ENCODE measurements at regions of chr16 and their contacts with region 1.

Region 1: DNA sequence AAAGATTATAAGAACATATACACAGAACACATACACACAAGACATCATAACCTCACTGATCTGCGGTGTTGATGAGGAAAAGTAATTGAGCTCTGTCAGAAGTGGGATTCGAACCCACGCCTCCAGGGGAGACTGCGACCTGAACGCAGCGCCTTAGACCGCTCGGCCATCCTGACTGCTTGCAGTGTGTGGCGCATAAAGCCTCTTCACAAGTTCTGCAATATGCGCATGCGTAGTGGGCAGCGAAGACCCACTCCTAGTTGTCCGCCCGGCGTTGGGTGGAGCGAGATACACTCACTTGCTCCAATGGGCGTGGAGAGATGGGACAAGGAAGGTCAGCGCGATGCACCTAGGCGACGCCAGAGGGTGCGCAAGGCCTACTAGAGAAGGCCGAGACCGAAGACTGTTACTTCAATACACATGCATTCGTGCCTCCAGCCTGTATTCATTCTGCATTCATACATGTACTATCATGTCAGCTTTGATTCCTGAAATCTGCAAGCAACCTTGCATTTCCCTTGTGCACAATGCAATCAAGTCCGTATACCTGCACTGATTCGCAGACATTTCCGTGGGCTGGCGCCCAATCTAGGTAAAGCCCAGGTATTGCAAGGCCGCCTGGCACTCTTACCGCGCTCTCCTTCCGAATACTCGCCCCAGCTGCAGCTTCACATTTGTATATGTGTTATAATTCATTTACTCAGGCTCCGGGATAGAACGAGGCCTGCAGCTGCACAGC is 16.1 kb upstream of the PLLP start:
- DNase-seq: peak; percentile 100
- H3K4me3 ChIP-seq: peak overlapping the region; percentile 47 to 65 (median 52)
- H3K27ac ChIP-seq: peak overlapping the region; percentile 88 to 97 (median 92)
- H3K4me1 ChIP-seq: peaks cover 41 to 45% (median 42%) of the 10 kb centered on the region in 4 donors
- H3K27me3 ChIP-seq: no peaks in the 10 kb centered on the region
- CTCF ChIP-seq: peak; percentile 94 to 99 (median 95)
- EP300 ChIP-seq: no peak
- POLR2A ChIP-seq: no peak

Region 2: DNA sequence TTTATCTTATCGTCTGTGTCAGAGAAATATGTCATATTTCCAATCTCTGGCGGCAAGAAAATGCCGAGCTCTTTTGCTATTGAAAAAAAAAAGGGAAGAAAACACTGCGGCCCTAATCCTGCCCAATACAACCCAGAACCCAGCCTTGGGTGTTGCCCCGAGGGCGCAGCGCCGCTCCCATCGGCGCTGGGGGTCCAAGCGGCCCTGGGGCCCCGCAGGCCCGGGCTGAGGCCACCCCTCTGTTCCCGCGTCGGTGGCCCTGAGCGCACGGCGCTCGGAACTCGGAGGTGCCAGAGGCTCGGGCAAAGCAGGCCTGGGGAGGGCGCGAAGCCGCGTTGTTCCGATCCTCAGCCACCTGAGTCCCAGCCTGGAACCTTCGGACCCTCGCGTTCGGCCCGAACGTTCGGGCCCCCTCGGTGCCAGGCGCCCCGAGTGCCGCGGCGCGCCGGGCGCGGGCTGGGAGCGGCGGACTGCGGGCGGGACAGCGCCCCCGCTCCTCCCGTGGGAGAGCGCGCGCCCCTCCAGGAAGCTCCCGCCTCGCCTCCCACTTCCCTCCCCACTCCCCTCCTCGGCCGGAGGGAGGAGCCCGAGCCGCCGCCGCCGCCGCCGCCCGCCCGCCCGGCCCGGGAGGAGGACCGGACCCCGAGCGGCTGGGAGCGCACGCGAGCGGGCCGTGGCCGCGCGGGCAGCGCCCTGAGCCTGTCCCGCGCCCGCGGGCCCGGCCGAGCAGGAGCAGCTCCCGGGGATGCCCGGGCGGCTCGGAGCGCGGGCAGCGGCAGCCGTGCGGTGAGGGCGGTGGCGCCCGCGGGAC is 208.4 kb before region 1 on chr16 and contains the start of gene CPNE2:
- intact Hi-C with region 1: loop called (anchors 5 kb)
- DNase-seq: no peak
- H3K4me3 ChIP-seq: peak within 1 kb of the TSS; percentile 75 to 99 (median 87)
- H3K27ac ChIP-seq: peak within 1 kb of the TSS; percentile 81 to 88 (median 84)
- H3K4me1 ChIP-seq: peaks cover 15 to 40% (median 29%) of the 10 kb centered on the region in 4 donors
- H3K27me3 ChIP-seq: no peaks in the 10 kb centered on the region
- CTCF ChIP-seq: peak in 1 of 3 experiments; percentile 11
- EP300 ChIP-seq: no peak
- POLR2A ChIP-seq: no peak
- total RNA-seq, gene CPNE2: 21.6 to 43.0 (median 34.9) TPM

Region 3: DNA sequence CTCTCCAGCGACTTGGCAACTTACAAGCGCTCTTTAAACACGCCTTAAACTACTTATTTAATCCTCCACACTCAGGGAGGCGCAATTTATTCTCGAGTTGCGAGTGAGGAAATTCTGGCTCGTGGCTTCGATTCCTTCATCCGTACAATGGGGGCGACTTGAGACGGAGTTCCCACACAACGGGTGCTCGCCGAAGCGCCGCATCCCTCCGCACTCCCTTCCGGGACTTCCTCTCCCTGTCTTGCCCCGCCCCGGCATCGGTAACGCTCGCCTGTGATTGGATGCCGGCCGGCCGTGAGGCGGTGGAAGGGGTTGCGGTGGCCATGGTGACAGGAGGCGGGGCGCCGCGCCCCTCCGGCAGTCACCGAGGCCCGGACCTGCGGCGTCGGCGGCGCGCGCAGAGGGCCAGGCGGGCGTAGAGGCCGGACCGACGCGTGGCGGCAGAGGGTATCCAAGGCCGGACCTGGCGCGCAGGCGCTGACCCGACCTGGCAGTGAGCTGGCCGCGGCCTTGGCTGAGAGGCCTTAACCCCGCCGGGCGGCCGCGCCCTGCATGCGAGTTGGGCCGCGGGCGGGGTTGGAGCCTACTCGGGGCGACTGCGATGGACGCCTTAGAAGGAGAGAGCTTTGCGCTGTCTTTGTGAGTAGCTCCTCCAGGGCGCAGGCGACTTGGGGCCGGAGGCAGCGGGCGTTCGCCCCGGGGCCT is 55.6 kb before region 1 on chr16 and contains the start of gene ARL2BP:
- intact Hi-C with region 1: loop called (anchors 5 kb)
- DNase-seq: peak; percentile 99
- H3K4me3 ChIP-seq: peak within 1 kb of the TSS; percentile 80 to 90 (median 82)
- H3K27ac ChIP-seq: peak within 1 kb of the TSS; percentile 92 to 95 (median 94)
- H3K4me1 ChIP-seq: peaks cover 13 to 23% (median 21%) of the 10 kb centered on the region in 4 donors
- H3K27me3 ChIP-seq: no peaks in the 10 kb centered on the region
- CTCF ChIP-seq: peak in 1 of 3 experiments; percentile 7
- EP300 ChIP-seq: no peak
- POLR2A ChIP-seq: no peak
- total RNA-seq, gene ARL2BP: 58.1 to 77.4 (median 66.9) TPM

Region 4: GRCh38 chr16:57372372-57373116 is 72.0 kb after region 1 on chr16 and contains the start of gene CX3CL1:
- intact Hi-C with region 1: loop called (anchors 2 kb)
- DNase-seq: no peak
- H3K4me3 ChIP-seq: peak within 1 kb of the TSS; percentile 75 to 83 (median 80)
- H3K27ac ChIP-seq: peak within 1 kb of the TSS; percentile 95 to 97 (median 96)
- H3K4me1 ChIP-seq: peaks cover 34 to 63% (median 58%) of the 10 kb centered on the region in 4 donors
- H3K27me3 ChIP-seq: no peaks in the 10 kb centered on the region
- CTCF ChIP-seq: peak in 1 of 3 experiments; percentile 40
- EP300 ChIP-seq: no peak
- POLR2A ChIP-seq: peak; percentile 58
- total RNA-seq, gene CX3CL1: 26.8 to 40.4 (median 29.9) TPM

Region 5: GRCh38 chr16:57422026-57422944 is 121.7 kb after region 1 on chr16:
- intact Hi-C with region 1: loop called (anchors 1 kb)
- DNase-seq: no peak
- H3K4me3 ChIP-seq: no peak overlapping the region
- H3K27ac ChIP-seq: peak overlapping the region; percentile 9 to 57 (median 40)
- H3K4me1 ChIP-seq: peaks cover 36 to 46% (median 42%) of the 10 kb centered on the region in 4 donors
- H3K27me3 ChIP-seq: no peaks in the 10 kb centered on the region
- CTCF ChIP-seq: peak; percentile 72 to 78 (median 76)
- EP300 ChIP-seq: no peak
- POLR2A ChIP-seq: no peak

Region 6: GRCh38 chr16:57528491-57529390 is 228.2 kb after region 1 on chr16:
- intact Hi-C with region 1: loop called (anchors 5 kb)
- DNase-seq: no peak
- H3K4me3 ChIP-seq: no peak overlapping the region
- H3K27ac ChIP-seq: peak overlapping the region in 3 of 4 donors; percentile 83 to 90 (median 87)
- H3K4me1 ChIP-seq: peaks cover 30 to 52% (median 46%) of the 10 kb centered on the region in 4 donors
- H3K27me3 ChIP-seq: no peaks in the 10 kb centered on the region
- CTCF ChIP-seq: no peak
- EP300 ChIP-seq: no peak
- POLR2A ChIP-seq: no peak

Measured in esophagus muscularis mucosa (tissue), 4 donors.